ENCODE measurements at regions of chr10 and their contacts with region 1.

Region 1: GRCh38 chr10:71270301-71271220 is 48.5 kb upstream of the SLC29A3 start:
- DNase-seq: peak; percentile 72
- ATAC-seq: peak; percentile 68
- H3K4me3 Mint-ChIP-seq: peak overlapping the region; percentile 57
- H3K27ac Mint-ChIP-seq: peak overlapping the region; percentile 98
- H3K4me1 Mint-ChIP-seq: peaks cover 64% of the 10 kb centered on the region
- H3K27me3 Mint-ChIP-seq: no peaks in the 10 kb centered on the region
- CTCF ChIP-seq: no peak; the same call in 1 of the 2 replicates

Region 2: DNA sequence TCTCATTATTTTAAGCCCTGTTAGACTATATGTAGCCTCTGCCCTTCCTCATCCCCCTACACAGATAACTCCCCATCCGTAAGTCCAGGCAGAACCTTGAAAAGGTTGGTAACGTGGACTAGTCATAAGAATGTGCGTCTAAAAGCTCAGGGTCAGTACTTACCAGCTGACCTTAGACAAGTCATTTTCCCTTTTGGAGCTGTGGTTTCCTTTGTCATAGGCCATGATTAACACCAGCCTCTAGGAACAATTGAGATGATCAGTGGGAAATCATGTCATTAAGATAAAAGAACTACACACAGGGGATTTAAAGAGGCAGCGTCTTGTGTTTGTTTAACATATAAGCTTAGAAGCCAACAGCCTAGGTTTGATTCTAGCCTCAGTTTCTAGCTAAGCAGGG is 65.1 kb before region 1 on chr10:
- CTCF ChIA-PET with region 1: interaction called, 14 read pairs
- POLR2A ChIA-PET with region 1: no interaction called
- DNase-seq: no peak
- ATAC-seq: no peak
- H3K4me3 Mint-ChIP-seq: no peak overlapping the region
- H3K27ac Mint-ChIP-seq: no peak overlapping the region
- H3K4me1 Mint-ChIP-seq: peaks cover 34% of the 10 kb centered on the region
- H3K27me3 Mint-ChIP-seq: peaks cover 16% of the 10 kb centered on the region
- CTCF ChIP-seq: no peak

Region 3: DNA sequence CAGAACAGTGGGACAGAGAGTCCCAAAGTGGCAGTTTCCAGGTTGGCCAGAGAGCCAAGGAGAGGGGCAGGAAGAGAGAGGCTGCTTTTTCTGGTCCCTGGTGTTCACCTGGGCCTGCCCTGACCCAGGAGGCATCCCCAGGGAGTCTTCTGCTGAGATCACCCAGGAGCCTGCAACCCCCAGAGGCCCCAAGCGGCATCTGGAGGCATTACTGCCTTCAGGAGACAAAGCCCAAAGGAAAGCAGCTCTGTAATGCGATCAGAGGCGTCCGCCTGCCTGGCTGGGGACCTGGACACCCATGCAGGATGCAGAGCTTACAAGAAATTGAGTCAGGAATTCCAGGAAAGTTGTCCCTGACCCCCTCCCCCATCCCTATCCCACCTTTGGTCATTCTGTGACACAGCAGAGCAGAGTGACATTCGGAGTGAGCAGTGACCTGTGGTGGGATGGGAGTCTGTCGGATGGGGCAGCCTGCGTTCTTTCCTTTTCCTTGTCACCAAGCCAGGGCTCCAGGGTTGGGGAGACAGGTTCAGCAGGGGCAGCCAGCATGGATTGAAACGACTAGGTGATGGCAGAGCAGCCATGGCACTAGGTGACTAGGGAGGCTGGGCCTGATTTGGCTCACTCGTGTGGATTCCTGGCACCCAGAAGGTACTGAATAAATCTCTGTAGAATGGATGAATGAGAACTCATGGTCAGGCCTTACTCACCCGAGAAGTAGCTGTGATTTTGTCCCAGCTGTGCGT is 47.8 kb before region 1 on chr10:
- CTCF ChIA-PET with region 1: interaction called, 67 read pairs
- POLR2A ChIA-PET with region 1: interaction called, 7 read pairs
- DNase-seq: peak; percentile 46
- ATAC-seq: peak; percentile 62
- H3K4me3 Mint-ChIP-seq: no peak overlapping the region
- H3K27ac Mint-ChIP-seq: peak overlapping the region; percentile 95
- H3K4me1 Mint-ChIP-seq: peaks cover 53% of the 10 kb centered on the region
- H3K27me3 Mint-ChIP-seq: 0 out of 2 replicates have a peak, but pooled peaks cover 3% of the 10 kb centered on the region
- CTCF ChIP-seq: 0 out of 2 replicates have a peak, but pooled peaks have one; percentile 16

Region 4: DNA sequence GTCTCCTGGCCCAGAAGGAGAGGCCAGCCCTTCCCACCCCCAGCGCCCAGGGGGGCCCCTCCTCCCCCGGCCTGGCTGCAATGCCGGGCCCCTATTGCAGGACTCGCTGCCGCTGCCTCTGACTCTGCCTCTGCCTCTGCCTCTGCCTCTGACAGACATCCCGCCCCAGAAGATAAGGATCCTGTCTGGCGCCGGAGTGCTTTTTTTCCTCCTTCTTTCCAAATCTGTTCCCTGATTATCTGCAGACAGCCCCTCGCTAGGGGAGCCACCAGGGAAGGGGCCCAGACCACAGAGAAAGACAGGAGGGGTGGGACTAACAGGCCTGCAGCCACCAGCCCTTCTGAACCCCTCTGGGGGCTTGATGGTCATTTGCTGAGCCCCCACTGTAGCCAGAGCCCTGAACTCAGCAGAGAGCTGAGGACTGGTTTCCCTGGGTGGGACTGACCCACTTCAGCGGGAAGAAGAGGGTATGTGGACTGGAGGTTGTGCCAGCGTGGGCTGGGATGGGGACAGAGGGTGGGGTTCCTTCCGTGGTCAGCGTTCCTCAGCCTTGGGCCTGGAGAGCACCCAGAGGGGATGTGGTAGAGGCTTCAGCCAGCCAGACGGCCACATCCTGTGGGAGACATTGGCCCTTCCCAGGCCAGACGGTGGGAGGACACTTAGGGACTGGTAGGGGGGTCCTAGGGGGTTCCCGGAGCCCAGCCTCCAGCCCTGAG is 35.4 kb before region 1 on chr10:
- CTCF ChIA-PET with region 1: interaction called, 19 read pairs
- POLR2A ChIA-PET with region 1: no interaction called
- DNase-seq: no peak
- ATAC-seq: no peak
- H3K4me3 Mint-ChIP-seq: no peak overlapping the region
- H3K27ac Mint-ChIP-seq: no peak overlapping the region
- H3K4me1 Mint-ChIP-seq: peaks cover 70% of the 10 kb centered on the region
- H3K27me3 Mint-ChIP-seq: no peaks in the 10 kb centered on the region
- CTCF ChIP-seq: no peak

Region 5: GRCh38 chr10:71255808-71256660 is 14.5 kb before region 1 on chr10:
- CTCF ChIA-PET with region 1: interaction called, 45 read pairs
- POLR2A ChIA-PET with region 1: no interaction called
- DNase-seq: no peak
- ATAC-seq: no peak
- H3K4me3 Mint-ChIP-seq: no peak overlapping the region
- H3K27ac Mint-ChIP-seq: no peak overlapping the region; the same call in 1 of the 2 replicates
- H3K4me1 Mint-ChIP-seq: peaks cover 58% of the 10 kb centered on the region
- H3K27me3 Mint-ChIP-seq: no peaks in the 10 kb centered on the region
- CTCF ChIP-seq: no peak

Region 6: GRCh38 chr10:71359364-71360046 is 88.9 kb after region 1 on chr10:
- CTCF ChIA-PET with region 1: no interaction called
- POLR2A ChIA-PET with region 1: no interaction called
- DNase-seq: no peak
- ATAC-seq: no peak
- H3K4me3 Mint-ChIP-seq: no peak overlapping the region
- H3K27ac Mint-ChIP-seq: no peak overlapping the region
- H3K4me1 Mint-ChIP-seq: peaks cover 4% of the 10 kb centered on the region; the same call in 1 of the 2 replicates
- H3K27me3 Mint-ChIP-seq: no peaks in the 10 kb centered on the region
- CTCF ChIP-seq: no peak